Left colon (tissue), 2 donors: ENCODE measurements at regions of chr18 and their contacts with region 1.

Region 1: DNA sequence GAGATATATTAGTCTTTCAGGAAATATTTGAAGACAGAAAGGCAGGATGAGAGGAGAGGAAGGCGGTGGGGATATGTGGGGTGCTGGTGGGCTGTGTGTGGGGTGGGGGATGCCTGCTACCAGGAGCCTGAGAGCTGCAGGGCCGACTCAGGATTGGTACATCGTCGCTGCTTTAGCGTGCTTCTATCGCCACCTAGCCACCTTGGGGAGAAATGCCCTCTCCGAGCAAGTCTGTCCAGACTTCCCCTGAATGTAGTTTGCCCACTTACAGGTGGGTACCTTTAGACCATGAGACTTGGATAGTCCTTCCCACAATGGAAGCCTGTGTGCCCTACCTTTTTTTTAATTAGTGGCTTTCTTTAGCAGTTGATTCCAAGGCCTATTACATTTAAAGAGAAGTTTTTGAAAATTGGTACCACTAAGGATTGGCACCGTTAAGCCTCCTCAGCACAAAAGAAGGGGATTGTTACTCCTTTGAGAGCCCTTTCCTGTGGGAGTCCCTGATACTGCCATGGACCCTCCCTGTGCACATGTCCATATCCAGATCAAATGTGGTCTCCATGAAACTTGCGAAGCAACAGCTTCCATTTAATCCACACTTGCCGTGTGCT is 114.1 kb upstream of the NDUFV2 start:
- DNase-seq: peak; percentile 49 to 58
- ATAC-seq: peak; percentile 79

Region 2: GRCh38 chr18:8654503-8655451 is 333.6 kb before region 1 on chr18:
- intact Hi-C with region 1: loop called in 1 of 2 experiments (anchors 5 kb)
- DNase-seq: no peak
- ATAC-seq: peak; percentile 36

Region 3: GRCh38 chr18:8696749-8697211 is 291.6 kb before region 1 on chr18:
- intact Hi-C with region 1: loop called (anchors 5 to 10 kb)
- DNase-seq: peak; percentile 48 to 80
- ATAC-seq: peak; percentile 87

Region 4: GRCh38 chr18:8794133-8794986 is 194.0 kb before region 1 on chr18:
- intact Hi-C with region 1: loop called in 1 of 2 experiments (anchors 10 kb)
- DNase-seq: no peak
- ATAC-seq: peak; percentile 83

Region 5: DNA sequence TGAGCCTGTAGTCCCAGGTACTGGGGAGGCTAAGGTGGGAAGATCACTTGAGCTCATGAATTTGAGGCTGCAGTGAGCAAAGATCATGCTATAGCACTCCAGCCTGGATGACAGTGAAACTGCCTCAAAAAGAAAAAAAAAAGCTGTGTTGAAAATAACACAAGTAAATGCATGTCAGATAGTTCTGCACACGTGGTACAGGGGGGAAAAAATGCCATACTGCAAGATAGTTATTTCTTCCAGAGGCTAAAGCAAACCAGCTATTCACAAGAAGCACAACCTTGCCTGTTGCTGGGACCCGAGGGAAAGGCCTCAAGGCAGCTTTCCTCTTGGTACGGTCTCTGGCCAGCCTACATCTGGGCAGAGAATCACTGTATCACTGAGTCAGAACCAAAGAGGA is 65.7 kb before region 1 on chr18:
- intact Hi-C with region 1: no loop called
- DNase-seq: no peak
- ATAC-seq: no peak

Region 6: GRCh38 chr18:8937160-8938094 is 50.9 kb before region 1 on chr18:
- intact Hi-C with region 1: no loop called
- DNase-seq: no peak
- ATAC-seq: no peak

Region 7: DNA sequence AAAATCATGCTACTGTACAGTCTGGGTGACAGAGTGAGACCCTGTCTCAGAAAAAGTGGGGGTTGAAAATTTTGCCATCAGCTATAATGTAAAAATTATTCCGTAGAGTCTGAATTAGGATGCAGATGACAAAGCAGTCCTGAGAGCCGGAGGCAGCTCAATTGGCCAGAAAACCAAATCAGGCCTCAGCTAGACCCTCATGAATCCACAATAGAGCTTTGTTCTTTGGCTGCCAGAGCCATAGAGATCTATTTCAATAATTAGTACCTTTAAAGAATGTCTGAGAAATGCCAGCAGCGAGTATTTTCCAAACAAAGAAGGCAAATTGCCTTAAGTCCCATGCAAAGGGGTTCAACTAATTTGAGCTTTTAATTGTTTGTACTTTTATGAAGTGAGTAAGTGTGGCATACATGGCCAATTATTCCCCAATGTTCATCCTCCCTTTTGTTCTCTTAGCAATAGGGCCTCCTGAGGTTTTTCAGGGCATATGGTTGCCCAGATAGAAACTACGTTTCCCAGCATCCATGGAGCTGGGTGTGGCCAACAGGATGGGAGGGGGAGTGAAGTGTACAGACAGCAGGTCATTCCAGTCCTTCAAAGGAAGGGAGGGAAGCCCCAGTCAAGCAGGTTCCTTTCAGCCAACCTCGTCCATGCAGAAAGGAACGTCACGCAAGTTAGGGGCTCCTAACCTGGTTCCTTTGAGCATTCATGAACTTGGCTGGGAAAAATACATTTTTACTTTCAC is 1254.7 kb after region 1 on chr18:
- intact Hi-C with region 1: no loop called
- DNase-seq: no peak
- ATAC-seq: no peak